Activated naive CD4-positive, alpha-beta T cell treated with anti-CD3 and anti-CD28 coated beads for 36 hours (primary cell): ENCODE measurements at regions of chr1 and their contacts with region 1.

Region 1: DNA sequence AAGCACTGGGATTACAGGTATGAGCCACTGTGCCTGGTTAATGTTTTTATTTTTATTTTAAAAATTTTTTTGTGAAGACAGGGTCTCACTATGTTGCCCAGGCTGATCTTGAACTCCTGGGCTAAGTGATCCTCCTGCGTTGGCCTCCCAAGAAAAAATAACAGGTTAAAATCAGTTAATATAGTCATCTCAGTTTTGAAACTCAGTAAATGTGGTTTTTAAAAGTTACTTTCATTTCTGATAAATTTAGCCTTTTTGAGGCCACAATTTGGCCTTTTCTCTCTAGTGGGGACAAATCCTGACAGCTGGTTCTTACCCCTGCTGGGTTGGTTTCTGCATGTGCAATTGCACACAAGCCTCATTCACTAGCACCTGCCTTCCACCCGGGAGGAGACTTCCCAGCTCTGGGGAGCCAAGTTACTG is 13.3 kb downstream of the PMF1 start:
- DNase-seq: peak; percentile 59
- H3K4me3 Mint-ChIP-seq: no peak overlapping the region
- H3K27ac Mint-ChIP-seq: peak overlapping the region; percentile 100
- H3K4me1 Mint-ChIP-seq: peaks cover 59% of the 10 kb centered on the region
- H3K27me3 Mint-ChIP-seq: no peaks in the 10 kb centered on the region

Region 2: DNA sequence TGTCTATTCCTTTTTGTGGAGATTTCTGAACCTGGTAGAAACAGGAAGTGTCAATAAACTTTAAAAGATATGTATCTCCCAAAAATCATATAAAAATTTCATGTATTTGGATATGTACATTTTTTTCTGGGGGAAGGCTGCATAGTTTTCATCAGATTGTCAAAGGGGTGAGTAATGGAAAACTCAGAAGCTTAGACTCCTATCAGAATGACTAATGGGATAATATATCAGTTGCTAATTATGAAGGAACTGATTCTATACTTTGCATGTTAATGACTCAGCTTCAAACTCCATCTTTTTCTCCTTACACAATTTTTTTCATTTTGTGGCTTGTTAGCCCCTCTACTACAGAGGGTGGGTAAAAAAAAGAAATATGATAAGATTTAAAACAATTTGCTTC is 425.0 kb before region 1 on chr1:
- CTCF ChIA-PET with region 1: no interaction called
- intact Hi-C with region 1: no loop called
- DNase-seq: no peak
- H3K4me3 Mint-ChIP-seq: no peak overlapping the region
- H3K27ac Mint-ChIP-seq: peak overlapping the region; percentile 62
- H3K4me1 Mint-ChIP-seq: peaks cover 4% of the 10 kb centered on the region
- H3K27me3 Mint-ChIP-seq: no peaks in the 10 kb centered on the region

Region 3: GRCh38 chr1:156090822-156091188 is 135.3 kb before region 1 on chr1:
- CTCF ChIA-PET with region 1: interaction called, 13 read pairs
- intact Hi-C with region 1: loop called (anchors 1 kb)
- DNase-seq: peak; percentile 95
- H3K4me3 Mint-ChIP-seq: no peak overlapping the region
- H3K27ac Mint-ChIP-seq: no peak overlapping the region
- H3K4me1 Mint-ChIP-seq: peaks cover 7% of the 10 kb centered on the region
- H3K27me3 Mint-ChIP-seq: peaks cover 19% of the 10 kb centered on the region

Region 4: GRCh38 chr1:156140879-156141252 is 85.3 kb before region 1 on chr1:
- CTCF ChIA-PET with region 1: interaction called, 244 read pairs
- intact Hi-C with region 1: loop called (anchors 1 kb)
- DNase-seq: no peak
- H3K4me3 Mint-ChIP-seq: no peak overlapping the region
- H3K27ac Mint-ChIP-seq: no peak overlapping the region
- H3K4me1 Mint-ChIP-seq: peaks cover 4% of the 10 kb centered on the region
- H3K27me3 Mint-ChIP-seq: no peaks in the 10 kb centered on the region

Region 5: GRCh38 chr1:156193488-156194299 is 32.4 kb before region 1 on chr1 and contains the start of gene SLC25A44:
- CTCF ChIA-PET with region 1: interaction called, 90 read pairs
- intact Hi-C with region 1: loop called (anchors 1 kb)
- DNase-seq: peak; percentile 98
- H3K4me3 Mint-ChIP-seq: peak within 1 kb of the TSS; percentile 79
- H3K27ac Mint-ChIP-seq: peak within 1 kb of the TSS; percentile 74
- H3K4me1 Mint-ChIP-seq: peaks cover 59% of the 10 kb centered on the region
- H3K27me3 Mint-ChIP-seq: no peaks in the 10 kb centered on the region
- total RNA-seq, gene SLC25A44: 69.1 to 73.5 TPM

Region 6: GRCh38 chr1:156282479-156283222 is 56.5 kb after region 1 on chr1 and contains the start of gene SMG5:
- CTCF ChIA-PET with region 1: interaction called, 5 read pairs
- intact Hi-C with region 1: loop called (anchors 5 kb)
- DNase-seq: peak; percentile 99
- H3K4me3 Mint-ChIP-seq: peak within 1 kb of the TSS; percentile 99
- H3K27ac Mint-ChIP-seq: peak within 1 kb of the TSS; percentile 92
- H3K4me1 Mint-ChIP-seq: peaks cover 27% of the 10 kb centered on the region
- H3K27me3 Mint-ChIP-seq: no peaks in the 10 kb centered on the region
- total RNA-seq, gene SMG5: 77.1 to 83.4 TPM

Region 7: GRCh38 chr1:156365754-156366153 is 139.6 kb after region 1 on chr1:
- CTCF ChIA-PET with region 1: no interaction called
- intact Hi-C with region 1: no loop called
- DNase-seq: no peak
- H3K4me3 Mint-ChIP-seq: no peak overlapping the region
- H3K27ac Mint-ChIP-seq: no peak overlapping the region
- H3K4me1 Mint-ChIP-seq: peaks cover 4% of the 10 kb centered on the region
- H3K27me3 Mint-ChIP-seq: peaks cover 26% of the 10 kb centered on the region

Region 8: DNA sequence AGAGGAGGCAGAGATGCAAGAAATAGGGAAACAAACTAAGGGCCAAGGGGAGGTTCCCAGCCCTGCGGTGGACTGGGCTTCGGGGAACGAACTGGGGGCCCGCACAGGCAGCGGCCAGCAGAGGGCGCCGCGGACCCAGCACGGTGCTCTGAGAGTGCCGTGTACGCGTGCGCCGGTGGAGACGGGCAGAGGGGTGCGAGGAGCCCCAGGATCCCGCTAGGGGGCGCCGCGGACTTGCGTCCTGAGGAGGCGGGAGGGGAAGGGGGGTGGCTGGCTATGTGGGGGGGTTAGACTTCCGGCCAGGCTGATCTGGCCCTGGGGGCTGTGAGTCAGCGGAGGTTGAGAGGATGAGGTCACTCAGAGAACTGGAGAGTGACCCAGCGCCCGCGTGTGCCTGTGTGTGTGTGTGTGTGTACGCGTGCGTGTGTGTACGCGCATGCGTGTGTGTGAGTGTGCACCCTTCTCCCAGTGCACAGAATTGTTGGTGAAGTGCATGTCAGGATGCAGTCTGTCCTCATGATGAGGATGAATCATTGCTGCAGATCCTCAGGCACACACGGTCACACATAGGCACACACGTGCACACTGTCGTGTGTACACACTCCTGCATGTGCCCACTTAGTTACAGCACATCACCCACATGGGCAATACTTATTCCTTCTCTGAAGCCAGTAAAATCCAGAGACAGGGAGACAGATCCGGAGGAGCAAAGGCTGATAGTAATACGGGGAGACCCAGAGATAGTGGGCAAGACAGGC is 434.0 kb after region 1 on chr1:
- CTCF ChIA-PET with region 1: no interaction called
- intact Hi-C with region 1: no loop called
- DNase-seq: peak; percentile 96
- H3K4me3 Mint-ChIP-seq: peak overlapping the region; percentile 83
- H3K27ac Mint-ChIP-seq: peak overlapping the region; percentile 19
- H3K4me1 Mint-ChIP-seq: peaks cover 46% of the 10 kb centered on the region
- H3K27me3 Mint-ChIP-seq: peaks cover 29% of the 10 kb centered on the region